Activated B cell treated with CpG ODN at 0.5 μM for 24 hours (primary cell): ENCODE measurements at regions of chr12 and their contacts with region 1.

Region 1: GRCh38 chr12:120132863-120133385 is 16.4 kb upstream of the RAB35 start:
- DNase-seq: peak; percentile 22
- ATAC-seq: peak; percentile 81
- H3K4me3 Mint-ChIP-seq: peak overlapping the region; percentile 33
- H3K27ac Mint-ChIP-seq: peak overlapping the region; percentile 80
- H3K4me1 Mint-ChIP-seq: peaks cover 28% of the 10 kb centered on the region
- H3K27me3 Mint-ChIP-seq: no peaks in the 10 kb centered on the region
- CTCF ChIP-seq: no peak

Region 2: GRCh38 chr12:120110550-120111501 is 22.1 kb before region 1 on chr12:
- CTCF ChIA-PET with region 1: no interaction called
- POLR2A ChIA-PET with region 1: interaction called, 3 read pairs
- intact Hi-C with region 1: loop called (anchors 2 kb)
- DNase-seq: peak; percentile 59
- ATAC-seq: peak; percentile 89
- H3K4me3 Mint-ChIP-seq: peak overlapping the region; percentile 66
- H3K27ac Mint-ChIP-seq: peak overlapping the region; percentile 87
- H3K4me1 Mint-ChIP-seq: peaks cover 70% of the 10 kb centered on the region
- H3K27me3 Mint-ChIP-seq: no peaks in the 10 kb centered on the region
- CTCF ChIP-seq: no peak

Region 3: GRCh38 chr12:120144215-120144614 is 11.3 kb after region 1 on chr12:
- CTCF ChIA-PET with region 1: no interaction called
- POLR2A ChIA-PET with region 1: no interaction called
- intact Hi-C with region 1: no loop called
- DNase-seq: no peak
- ATAC-seq: no peak
- H3K4me3 Mint-ChIP-seq: no peak overlapping the region
- H3K27ac Mint-ChIP-seq: no peak overlapping the region
- H3K4me1 Mint-ChIP-seq: no peaks in the 10 kb centered on the region
- H3K27me3 Mint-ChIP-seq: no peaks in the 10 kb centered on the region
- CTCF ChIP-seq: no peak